CD8-positive, alpha-beta T cell (primary cell): ENCODE measurements at regions of chr14 and their contacts with region 1.

Region 1: DNA sequence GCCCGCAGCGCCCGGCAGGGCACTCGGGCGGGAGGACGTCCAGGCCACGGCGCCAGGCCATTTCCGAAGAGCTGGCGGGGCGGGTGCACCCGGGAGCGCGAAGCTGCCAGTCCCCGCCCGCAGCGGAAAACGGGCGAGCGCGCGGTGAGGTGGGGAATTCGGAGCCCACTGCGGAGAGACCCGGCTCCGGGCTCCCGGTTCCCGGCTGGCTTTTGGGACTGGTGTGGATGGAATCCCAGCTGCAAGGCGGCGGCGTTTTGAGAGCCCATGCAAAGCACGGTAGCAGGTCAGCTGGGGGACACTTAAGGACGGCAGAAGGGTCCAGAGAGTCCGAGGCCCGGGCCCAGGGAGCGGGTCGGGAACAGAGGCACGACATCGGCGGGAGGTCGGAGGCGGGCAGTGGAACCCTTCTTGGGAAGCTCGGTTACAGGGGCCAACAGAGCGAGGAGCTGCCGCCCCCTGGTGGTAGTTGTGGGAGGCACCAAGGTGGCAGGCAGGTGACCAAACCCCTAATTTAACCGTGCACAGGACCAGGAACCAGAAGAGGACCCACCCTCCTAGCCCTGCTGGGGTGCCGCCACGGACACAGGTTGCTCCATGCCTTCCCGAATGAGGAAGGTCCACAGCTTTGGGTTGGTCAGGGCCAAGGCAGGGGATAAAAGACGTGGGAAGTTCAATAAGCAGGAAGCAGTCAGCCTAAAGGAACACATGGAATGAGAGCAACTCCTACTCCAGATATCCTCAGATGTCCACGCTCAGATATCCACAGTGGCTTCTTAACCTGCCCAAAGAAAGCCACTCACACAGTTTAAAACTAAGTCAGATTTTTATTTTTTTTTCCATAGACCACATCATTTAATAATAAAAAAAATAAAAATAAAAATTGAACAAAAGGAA is 685 bp upstream of the CDH24 start:
- DNase-seq: peak; percentile 70 to 92 (median 88)
- ATAC-seq: peak; percentile 70
- H3K4me3 ChIP-seq: peak overlapping the region; percentile 56 to 84
- H3K4me3 Mint-ChIP-seq: peak overlapping the region; percentile 87
- H3K27ac ChIP-seq: no peak overlapping the region
- H3K27ac Mint-ChIP-seq: peak overlapping the region; percentile 18
- H3K4me1 ChIP-seq: peaks cover 10% of the 10 kb centered on the region
- H3K4me1 Mint-ChIP-seq: peaks cover 17% of the 10 kb centered on the region
- H3K27me3 ChIP-seq: no peaks in the 10 kb centered on the region
- H3K27me3 Mint-ChIP-seq: no peaks in the 10 kb centered on the region
- CTCF ChIP-seq: peak; percentile 95

Region 2: DNA sequence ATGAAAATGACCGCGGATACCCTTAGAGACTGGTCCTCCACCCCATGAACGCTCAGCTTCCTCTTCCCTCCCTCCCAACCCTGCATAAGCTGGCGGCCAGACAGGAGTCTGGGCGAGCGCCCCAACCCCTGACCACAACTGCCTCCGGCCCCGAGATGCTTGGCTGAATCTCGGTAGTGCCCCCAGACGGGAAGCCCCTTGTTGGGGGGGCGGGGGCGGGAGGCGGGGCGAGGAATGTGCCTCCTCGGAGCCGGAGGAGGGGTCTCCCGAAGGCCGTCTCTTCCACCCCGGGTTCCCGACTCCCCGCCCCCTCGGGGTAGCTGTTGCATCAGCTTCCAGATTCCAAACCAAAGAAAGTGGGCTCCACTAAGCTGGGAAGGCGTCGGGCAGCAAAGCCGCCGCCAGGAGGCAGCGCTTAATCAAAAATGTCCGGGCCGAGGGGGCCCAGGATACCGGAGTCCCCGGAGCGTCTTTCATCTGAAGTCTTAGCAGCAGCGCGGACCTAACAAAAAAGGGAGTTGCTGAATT is 235.4 kb before region 1 on chr14:
- CTCF ChIA-PET with region 1: interaction called, 6 read pairs
- POLR2A ChIA-PET with region 1: no interaction called
- intact Hi-C with region 1: loop called (anchors 5 to 10 kb)
- DNase-seq: peak; percentile 41 to 85 (median 76)
- ATAC-seq: peak; percentile 89
- H3K4me3 ChIP-seq: peak overlapping the region; percentile 26 to 35
- H3K4me3 Mint-ChIP-seq: peak overlapping the region; percentile 61
- H3K27ac ChIP-seq: no peak overlapping the region
- H3K27ac Mint-ChIP-seq: no peak overlapping the region
- H3K4me1 ChIP-seq: peaks cover 10% of the 10 kb centered on the region
- H3K4me1 Mint-ChIP-seq: peaks cover 16% of the 10 kb centered on the region
- H3K27me3 ChIP-seq: peaks cover 4 to 21% of the 10 kb centered on the region in 2 experiments
- H3K27me3 Mint-ChIP-seq: peaks cover 23% of the 10 kb centered on the region
- CTCF ChIP-seq: peak; percentile 81

Region 3: DNA sequence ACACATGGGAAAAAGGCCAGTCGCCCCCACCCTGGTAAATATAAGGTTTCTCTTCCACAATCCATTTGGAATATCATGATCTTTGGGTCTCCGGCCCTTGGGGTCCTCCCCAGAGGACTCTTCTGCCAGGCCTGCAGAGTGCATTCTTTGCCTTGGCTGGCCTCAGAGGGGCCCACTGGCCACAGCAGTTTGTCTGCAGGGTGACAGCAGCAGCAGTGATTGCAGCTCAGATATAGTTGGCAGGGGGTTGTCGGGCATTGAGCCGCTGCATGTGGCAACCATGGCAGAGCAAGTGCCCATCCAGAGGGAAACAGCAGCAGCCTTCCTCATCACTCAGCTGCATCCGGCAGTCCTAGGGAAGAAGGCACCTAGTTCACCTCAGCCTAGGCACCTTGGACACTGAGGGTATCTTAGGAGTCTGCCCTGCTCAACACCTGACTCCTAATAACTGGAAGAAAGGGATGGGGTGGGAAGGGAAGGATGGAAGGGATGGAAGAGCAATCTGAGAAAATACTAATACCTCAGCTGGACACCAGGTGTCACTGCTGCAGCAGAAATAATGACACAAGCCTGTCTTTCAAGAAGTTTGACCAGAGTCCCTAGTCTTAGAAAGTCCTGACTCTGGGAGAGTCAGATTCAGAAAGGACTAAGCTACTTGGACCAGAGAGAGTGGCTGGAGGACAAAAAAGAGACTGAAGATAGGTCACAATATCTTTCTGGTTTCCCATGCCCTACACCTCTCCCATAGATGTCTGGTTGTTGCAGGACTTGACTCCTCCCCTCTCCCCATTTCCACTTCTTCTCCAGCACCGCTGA is 84.6 kb before region 1 on chr14:
- CTCF ChIA-PET with region 1: interaction called, 1,218 read pairs
- POLR2A ChIA-PET with region 1: interaction called, 4 read pairs
- intact Hi-C with region 1: loop called (anchors 1 kb)
- DNase-seq: peak in 7 of 9 experiments; percentile 30 to 70 (median 45)
- ATAC-seq: peak; percentile 52
- H3K4me3 ChIP-seq: no peak overlapping the region
- H3K4me3 Mint-ChIP-seq: no peak overlapping the region
- H3K27ac ChIP-seq: no peak overlapping the region
- H3K27ac Mint-ChIP-seq: no peak overlapping the region
- H3K4me1 ChIP-seq: no peaks in the 10 kb centered on the region
- H3K4me1 Mint-ChIP-seq: no peaks in the 10 kb centered on the region
- H3K27me3 ChIP-seq: no peaks in the 10 kb centered on the region
- H3K27me3 Mint-ChIP-seq: peaks cover 2% of the 10 kb centered on the region
- CTCF ChIP-seq: peak; percentile 64

Region 4: DNA sequence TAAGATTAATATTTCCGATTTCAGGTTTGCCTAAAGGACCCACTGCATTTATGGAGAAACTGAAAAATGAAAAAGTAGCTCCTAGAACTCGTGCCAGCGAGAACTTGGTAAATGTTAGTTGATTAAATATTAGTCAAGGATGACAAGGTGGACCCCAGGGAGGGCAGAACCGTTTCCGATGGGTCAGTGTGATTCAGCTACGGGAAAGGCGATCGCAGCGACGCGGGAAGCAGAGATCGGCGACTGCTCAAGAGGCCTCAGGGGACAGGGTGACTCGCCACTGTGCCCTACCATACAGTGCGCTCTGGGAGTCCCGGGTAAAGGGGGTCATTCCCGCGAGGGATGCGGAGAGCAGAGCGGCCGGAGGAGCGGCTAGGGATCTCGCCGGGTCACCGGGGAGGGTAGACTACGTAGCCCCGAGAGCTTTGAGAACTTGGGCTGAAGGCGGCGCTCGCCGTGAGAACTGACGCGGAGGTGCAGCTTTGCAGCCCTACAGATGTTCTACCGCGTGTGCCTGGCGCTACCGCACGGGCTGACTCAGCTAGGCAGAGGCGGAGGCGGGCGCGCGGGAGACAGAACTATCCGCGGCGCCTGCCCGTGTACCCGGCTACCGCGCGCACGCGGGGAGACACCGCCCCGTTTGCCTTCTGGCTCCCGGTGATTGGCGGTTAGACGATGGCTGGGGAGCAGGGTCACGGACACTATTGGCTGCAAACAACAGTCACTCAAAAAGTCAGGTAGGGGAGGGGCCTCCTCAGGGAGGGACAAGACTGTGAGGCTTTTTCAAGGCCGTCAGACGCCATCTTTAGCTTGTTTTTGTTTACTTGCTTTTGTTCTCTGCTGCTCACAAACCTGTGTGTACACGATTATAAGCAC is 51.2 kb before region 1 on chr14:
- CTCF ChIA-PET with region 1: interaction called, 1,218 read pairs
- POLR2A ChIA-PET with region 1: interaction called, 17 read pairs
- intact Hi-C with region 1: loop called in 1 of 2 experiments (anchors 1 kb)
- DNase-seq: peak; percentile 93 to 99 (median 96)
- ATAC-seq: peak; percentile 92
- H3K4me3 ChIP-seq: peak overlapping the region; percentile 84 to 87
- H3K4me3 Mint-ChIP-seq: peak overlapping the region; percentile 90
- H3K27ac ChIP-seq: peak overlapping the region; percentile 80 to 84
- H3K27ac Mint-ChIP-seq: peak overlapping the region; percentile 98
- H3K4me1 ChIP-seq: peaks cover 20% of the 10 kb centered on the region
- H3K4me1 Mint-ChIP-seq: peaks cover 41% of the 10 kb centered on the region
- H3K27me3 ChIP-seq: no peaks in the 10 kb centered on the region
- H3K27me3 Mint-ChIP-seq: no peaks in the 10 kb centered on the region
- CTCF ChIP-seq: no peak

Region 5: DNA sequence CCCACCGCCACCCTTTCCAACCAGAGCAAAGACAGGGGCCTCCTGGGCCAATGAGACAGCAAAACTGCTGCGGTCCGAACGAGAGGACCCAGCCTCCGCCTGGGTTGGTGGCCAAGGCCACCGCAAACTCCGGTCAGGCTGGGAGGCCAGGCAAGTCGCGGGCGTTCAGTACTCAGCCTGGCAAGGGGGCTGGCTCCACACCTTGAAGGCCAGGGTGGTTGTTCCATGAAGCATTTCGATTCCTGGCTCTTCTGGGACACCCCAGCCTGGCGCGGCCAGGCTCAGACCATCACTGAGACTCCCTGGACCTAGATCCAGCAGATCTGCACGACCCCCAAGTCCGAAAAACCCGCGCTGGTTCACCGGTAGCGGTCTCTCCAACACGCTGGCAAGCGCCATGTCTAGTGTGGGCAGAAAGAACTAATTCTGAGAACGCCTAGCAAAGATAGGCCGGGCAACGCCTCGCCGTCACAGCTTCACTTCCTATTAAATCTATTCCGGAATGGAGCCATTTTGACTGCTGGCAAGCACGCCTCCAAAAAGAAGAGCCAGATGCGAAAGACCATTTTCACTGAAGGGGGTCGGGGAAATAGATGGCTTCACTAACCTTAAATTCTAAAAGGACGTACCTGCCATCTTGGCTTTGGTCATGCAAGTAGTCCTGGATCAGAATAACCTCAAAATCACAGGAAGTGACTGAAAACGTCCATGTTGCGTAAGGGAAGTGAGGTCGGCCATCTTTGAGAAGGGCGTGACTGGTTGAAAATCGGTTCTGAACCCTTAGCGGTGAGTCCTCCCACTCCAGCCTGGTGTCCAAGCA is 23.3 kb before region 1 on chr14 and contains the start of gene PSMB5:
- CTCF ChIA-PET with region 1: interaction called, 7 read pairs
- POLR2A ChIA-PET with region 1: no interaction called
- intact Hi-C with region 1: loop called in 1 of 2 experiments (anchors 2 kb)
- DNase-seq: peak; percentile 74 to 97 (median 87)
- ATAC-seq: peak; percentile 91
- H3K4me3 ChIP-seq: peak within 1 kb of the TSS; percentile 67 to 71
- H3K4me3 Mint-ChIP-seq: peak within 1 kb of the TSS; percentile 90
- H3K27ac ChIP-seq: peak within 1 kb of the TSS; percentile 75 to 97
- H3K27ac Mint-ChIP-seq: peak within 1 kb of the TSS; percentile 98
- H3K4me1 ChIP-seq: peaks cover 21% of the 10 kb centered on the region
- H3K4me1 Mint-ChIP-seq: peaks cover 34% of the 10 kb centered on the region
- H3K27me3 ChIP-seq: no peaks in the 10 kb centered on the region
- H3K27me3 Mint-ChIP-seq: no peaks in the 10 kb centered on the region
- CTCF ChIP-seq: no peak
- total RNA-seq, gene PSMB5: 18.6 to 20.2 TPM

Region 6: DNA sequence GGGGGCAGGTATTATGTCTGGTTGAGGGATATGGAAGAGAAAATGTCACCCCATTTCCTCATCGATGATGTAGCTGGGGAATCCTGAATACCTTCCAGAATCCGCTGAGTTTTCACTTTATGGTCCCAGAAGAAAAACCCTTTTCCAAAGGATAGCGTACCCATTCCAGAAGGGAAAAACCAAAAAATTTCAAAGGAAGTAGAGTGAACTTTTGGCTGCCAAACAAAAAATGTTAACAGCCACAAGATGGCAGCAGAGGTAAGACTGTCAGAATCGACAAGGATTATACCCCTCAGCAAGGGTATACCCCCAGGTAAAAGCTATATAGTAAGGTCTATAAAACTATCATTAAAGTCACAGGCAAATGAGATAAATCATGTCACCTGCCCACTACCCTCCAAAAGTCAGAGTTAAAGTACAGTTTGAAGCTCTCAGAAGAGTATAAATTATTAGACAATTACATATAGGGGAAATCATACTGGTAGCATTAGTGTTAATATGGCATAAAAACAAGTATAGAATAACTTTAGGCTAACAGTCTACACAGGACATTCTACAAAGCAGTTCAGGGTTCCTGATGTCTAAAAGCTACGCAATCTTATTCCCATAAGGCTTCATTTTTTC is 18.9 kb after region 1 on chr14:
- CTCF ChIA-PET with region 1: interaction called, 22 read pairs
- POLR2A ChIA-PET with region 1: no interaction called
- intact Hi-C with region 1: no loop called
- DNase-seq: peak in 3 of 9 experiments; percentile 43 to 66 (median 56)
- ATAC-seq: peak; percentile 89
- H3K4me3 ChIP-seq: no peak overlapping the region
- H3K4me3 Mint-ChIP-seq: no peak overlapping the region
- H3K27ac ChIP-seq: no peak overlapping the region
- H3K27ac Mint-ChIP-seq: no peak overlapping the region
- H3K4me1 ChIP-seq: peaks cover 2% of the 10 kb centered on the region
- H3K4me1 Mint-ChIP-seq: peaks cover 19% of the 10 kb centered on the region
- H3K27me3 ChIP-seq: no peaks in the 10 kb centered on the region
- H3K27me3 Mint-ChIP-seq: no peaks in the 10 kb centered on the region
- CTCF ChIP-seq: peak; percentile 85